Activated CD8-positive, alpha-beta memory T cell treated with anti-CD3 and anti-CD28 coated beads, Interleukin-2, amount 10 ng/mL, durations not matched to agents 7 days and 5 days (primary cell): ENCODE measurements at regions of chr4 and their contacts with region 1.

Region 1: GRCh38 chr4:26885912-26886274 is 25.3 kb downstream of the STIM2 start:
- DNase-seq: peak; percentile 65
- ATAC-seq: peak; percentile 58
- H3K4me3 Mint-ChIP-seq: peak overlapping the region; percentile 63
- H3K27ac Mint-ChIP-seq: peak overlapping the region; percentile 94
- H3K4me1 Mint-ChIP-seq: peaks cover 61% of the 10 kb centered on the region
- H3K27me3 Mint-ChIP-seq: no peaks in the 10 kb centered on the region

Region 2: DNA sequence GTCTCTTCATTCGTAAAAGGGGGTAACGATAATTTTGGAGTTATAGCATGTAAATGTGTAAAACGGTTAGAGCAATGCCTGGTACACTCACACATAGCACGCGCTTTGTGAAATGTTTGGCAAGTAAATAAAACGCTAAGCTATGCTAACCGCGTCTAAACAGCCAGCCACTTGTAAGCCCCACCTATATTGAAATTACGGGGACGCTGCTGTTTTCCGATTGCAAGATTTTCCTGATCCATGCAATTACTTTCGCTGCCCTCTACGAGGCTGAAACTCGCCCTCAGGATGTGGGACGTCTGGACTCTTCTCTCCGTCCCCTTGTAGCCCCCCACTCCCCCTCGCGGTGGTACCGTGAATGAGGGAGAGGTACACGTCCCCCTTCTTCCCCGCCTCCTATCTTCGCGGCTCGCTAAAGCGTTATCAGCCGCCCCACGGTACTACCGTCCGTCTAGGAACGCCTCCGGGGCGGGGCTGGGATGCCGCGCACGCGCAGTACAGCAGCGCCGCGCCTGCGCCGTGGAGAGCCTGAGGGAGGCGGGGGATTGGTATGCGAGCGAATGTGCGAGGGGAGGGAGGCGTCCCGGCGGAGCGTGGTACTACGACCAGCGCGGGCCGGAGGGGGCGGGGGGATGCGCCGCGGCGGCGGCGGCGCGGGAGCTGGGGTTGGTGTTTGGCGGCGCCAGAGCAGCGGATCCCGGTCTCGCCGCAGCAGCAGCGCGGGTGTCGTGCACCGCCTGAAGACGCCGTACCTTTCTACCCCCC is 25.6 kb before region 1 on chr4 and contains the start of gene STIM2:
- CTCF ChIA-PET with region 1: interaction called, 23 read pairs
- DNase-seq: peak; percentile 98
- ATAC-seq: peak; percentile 74
- H3K4me3 Mint-ChIP-seq: peak within 1 kb of the TSS; percentile 87
- H3K27ac Mint-ChIP-seq: peak within 1 kb of the TSS; percentile 99
- H3K4me1 Mint-ChIP-seq: peaks cover 50% of the 10 kb centered on the region
- H3K27me3 Mint-ChIP-seq: no peaks in the 10 kb centered on the region
- total RNA-seq, gene STIM2: 54.6 to 66.3 TPM

Region 3: DNA sequence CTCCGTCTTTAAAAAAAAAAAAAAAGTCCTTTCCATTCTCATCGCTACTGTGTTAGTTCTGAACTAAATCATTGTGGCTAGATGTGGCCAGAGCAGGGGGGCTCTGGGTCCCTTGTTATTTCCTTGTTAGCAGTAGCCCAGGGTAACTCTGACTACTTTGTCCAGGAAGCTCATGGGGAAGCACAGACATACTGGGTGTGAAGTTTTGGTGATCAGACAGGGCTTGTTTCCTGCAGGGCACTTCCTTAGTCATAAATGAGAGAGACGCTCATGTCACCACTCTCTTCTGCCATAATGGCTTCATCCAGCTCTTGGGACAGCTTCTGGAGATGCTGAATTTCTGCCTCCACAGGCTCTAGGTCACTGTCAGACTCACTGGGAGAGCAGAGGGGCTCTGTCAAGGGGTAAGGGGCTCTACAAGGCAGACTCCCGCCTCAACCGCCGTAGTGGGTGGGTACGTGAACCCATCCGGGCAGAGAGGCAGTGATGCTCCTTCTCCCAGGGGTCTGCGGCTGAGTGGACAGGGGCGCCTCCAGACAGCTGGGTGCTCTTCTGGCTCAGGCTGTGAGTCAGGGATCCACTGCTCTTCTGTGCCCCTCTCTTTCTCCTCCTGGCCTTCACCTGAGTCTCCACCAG is 12.4 kb before region 1 on chr4:
- CTCF ChIA-PET with region 1: interaction called, 23 read pairs
- DNase-seq: peak; percentile 93
- ATAC-seq: peak; percentile 93
- H3K4me3 Mint-ChIP-seq: peak overlapping the region; percentile 48
- H3K27ac Mint-ChIP-seq: peak overlapping the region; percentile 89
- H3K4me1 Mint-ChIP-seq: peaks cover 75% of the 10 kb centered on the region
- H3K27me3 Mint-ChIP-seq: no peaks in the 10 kb centered on the region